Posterior vena cava (tissue), 2 donors: ENCODE measurements at regions of chr19 and their contacts with region 1.

Region 1: GRCh38 chr19:48954595-48955310 is at the start of gene BAX:
- DNase-seq: peak; percentile 99
- total RNA-seq, gene BAX: 44.6 to 53.4 TPM

Region 2: GRCh38 chr19:48899781-48900476 is 54.8 kb before region 1 on chr19 and contains the start of gene NUCB1:
- intact Hi-C with region 1: loop called in 1 of 2 experiments (anchors 10 kb)
- DNase-seq: peak; percentile 100
- total RNA-seq, gene NUCB1: 219 to 282 TPM

Region 3: GRCh38 chr19:49430678-49431329 is 476.1 kb after region 1 on chr19:
- intact Hi-C with region 1: no loop called
- DNase-seq: no peak